ENCODE measurements at regions of chr1 and their contacts with region 1.

Region 1: GRCh38 chr1:205907794-205908193 is 35.5 kb downstream of the SLC26A9 start:
- DNase-seq: peak in 1 of 2 experiments; percentile 38
- H3K4me3 ChIP-seq: no peak overlapping the region
- H3K27ac ChIP-seq: peak overlapping the region; percentile 61
- H3K4me1 ChIP-seq: peaks cover 6% of the 10 kb centered on the region
- H3K27me3 ChIP-seq: no peaks in the 10 kb centered on the region
- CTCF ChIP-seq: peak; percentile 86

Region 2: GRCh38 chr1:205791568-205792180 is 116.1 kb before region 1 on chr1:
- CTCF ChIA-PET with region 1: interaction called, 5 read pairs
- POLR2A ChIA-PET with region 1: no interaction called
- intact Hi-C with region 1: loop called (anchors 1 kb)
- DNase-seq: peak in 1 of 2 experiments; percentile 63
- H3K4me3 ChIP-seq: no peak overlapping the region
- H3K27ac ChIP-seq: no peak overlapping the region
- H3K4me1 ChIP-seq: no peaks in the 10 kb centered on the region
- H3K27me3 ChIP-seq: no peaks in the 10 kb centered on the region
- CTCF ChIP-seq: peak; percentile 86

Region 3: GRCh38 chr1:205812878-205813754 is 94.7 kb before region 1 on chr1 and contains the start of gene SLC41A1:
- CTCF ChIA-PET with region 1: no interaction called
- POLR2A ChIA-PET with region 1: no interaction called
- intact Hi-C with region 1: loop called (anchors 5 kb)
- DNase-seq: peak; percentile 78 to 89
- H3K4me3 ChIP-seq: peak within 1 kb of the TSS; percentile 80
- H3K27ac ChIP-seq: peak within 1 kb of the TSS; percentile 32
- H3K4me1 ChIP-seq: peaks cover 14% of the 10 kb centered on the region
- H3K27me3 ChIP-seq: no peaks in the 10 kb centered on the region
- CTCF ChIP-seq: no peak
- total RNA-seq, gene SLC41A1: 26.5 and 34.5 TPM in 2 replicates

Region 4: DNA sequence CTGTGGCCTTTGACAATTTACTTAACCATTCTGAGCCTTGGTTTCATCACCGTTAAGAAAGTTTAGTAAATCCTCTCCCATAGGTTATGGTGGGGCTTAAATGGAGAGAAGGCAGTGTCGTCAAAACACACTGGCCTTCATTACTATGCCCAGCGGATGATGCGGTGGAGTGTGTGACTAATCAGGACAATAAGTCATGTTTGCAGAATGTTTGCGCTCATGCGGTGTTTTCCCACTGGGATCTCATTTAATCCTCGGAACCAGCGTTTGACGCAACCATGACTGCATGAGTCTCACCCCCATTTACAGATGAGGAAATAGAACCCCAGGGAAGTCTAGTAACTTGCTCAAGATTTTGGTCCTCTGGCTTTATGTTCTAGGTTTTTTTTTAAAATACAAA is 17.9 kb after region 1 on chr1:
- CTCF ChIA-PET with region 1: no interaction called
- POLR2A ChIA-PET with region 1: no interaction called
- intact Hi-C with region 1: no loop called
- DNase-seq: peak in 1 of 2 experiments; percentile 50
- H3K4me3 ChIP-seq: no peak overlapping the region
- H3K27ac ChIP-seq: no peak overlapping the region
- H3K4me1 ChIP-seq: peaks cover 5% of the 10 kb centered on the region; the same call in 1 of the 2 replicates
- H3K27me3 ChIP-seq: no peaks in the 10 kb centered on the region
- CTCF ChIP-seq: no peak

Measured in PC-9 (cell line).